A549 (cell line): ENCODE measurements at regions of chr3 and their contacts with region 1.

Region 1: GRCh38 chr3:149969940-149970715 is 567 bp downstream of the PFN2 start:
- DNase-seq: peak; percentile 29 to 88
- ATAC-seq: peak; percentile 60 to 73
- H3K4me3 ChIP-seq: peak overlapping the region; percentile 91
- H3K27ac ChIP-seq: peak overlapping the region; percentile 98 to 99
- H3K4me1 ChIP-seq: peaks cover 35% of the 10 kb centered on the region
- CTCF ChIP-seq: no peak
- EP300 ChIP-seq: no peak
- POLR2A ChIP-seq: no peak
- RAD21 ChIP-seq: no peak

Region 2: GRCh38 chr3:149949181-149949580 is 20.9 kb before region 1 on chr3:
- CTCF ChIA-PET with region 1: interaction called, 11 read pairs
- POLR2A ChIA-PET with region 1: no interaction called
- DNase-seq: no peak
- ATAC-seq: no peak
- H3K4me3 ChIP-seq: no peak overlapping the region
- H3K27ac ChIP-seq: no peak overlapping the region
- H3K4me1 ChIP-seq: no peaks in the 10 kb centered on the region
- CTCF ChIP-seq: no peak
- EP300 ChIP-seq: no peak
- POLR2A ChIP-seq: no peak
- RAD21 ChIP-seq: no peak

Region 3: DNA sequence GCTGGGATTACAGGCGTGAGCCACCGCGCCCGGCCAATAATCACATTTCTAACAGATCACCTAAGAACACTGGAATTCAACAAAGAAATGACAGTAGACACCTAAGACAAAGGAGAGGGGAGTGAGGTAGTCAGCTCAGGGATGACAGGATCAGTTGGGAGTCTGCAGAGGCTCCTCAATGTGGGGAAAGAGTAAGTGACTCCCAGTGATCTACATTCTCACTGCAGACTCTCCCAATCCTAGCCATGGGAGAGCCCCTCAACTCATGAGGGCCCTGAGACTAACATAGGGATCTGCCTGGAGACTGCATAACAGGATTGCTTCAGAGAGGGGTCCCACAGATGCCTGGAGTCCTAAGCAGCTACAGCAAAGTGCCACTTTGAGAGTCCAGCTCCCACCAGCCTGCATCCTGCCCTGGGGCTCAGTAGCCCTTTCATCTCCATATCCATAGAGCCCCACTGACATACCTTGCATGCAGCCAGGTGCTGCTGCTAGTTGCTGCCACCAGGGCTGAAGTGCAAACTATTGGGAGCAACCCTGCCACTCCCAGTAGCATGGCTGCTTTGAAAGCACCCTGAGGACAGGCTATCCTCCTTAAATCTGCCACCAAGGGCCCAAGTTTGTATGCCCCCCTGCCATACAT is 22.4 kb after region 1 on chr3:
- CTCF ChIA-PET with region 1: no interaction called
- POLR2A ChIA-PET with region 1: no interaction called
- DNase-seq: no peak
- ATAC-seq: no peak
- H3K4me3 ChIP-seq: no peak overlapping the region
- H3K27ac ChIP-seq: no peak overlapping the region
- H3K4me1 ChIP-seq: no peaks in the 10 kb centered on the region
- CTCF ChIP-seq: no peak
- EP300 ChIP-seq: no peak
- POLR2A ChIP-seq: no peak
- RAD21 ChIP-seq: no peak

Region 4: DNA sequence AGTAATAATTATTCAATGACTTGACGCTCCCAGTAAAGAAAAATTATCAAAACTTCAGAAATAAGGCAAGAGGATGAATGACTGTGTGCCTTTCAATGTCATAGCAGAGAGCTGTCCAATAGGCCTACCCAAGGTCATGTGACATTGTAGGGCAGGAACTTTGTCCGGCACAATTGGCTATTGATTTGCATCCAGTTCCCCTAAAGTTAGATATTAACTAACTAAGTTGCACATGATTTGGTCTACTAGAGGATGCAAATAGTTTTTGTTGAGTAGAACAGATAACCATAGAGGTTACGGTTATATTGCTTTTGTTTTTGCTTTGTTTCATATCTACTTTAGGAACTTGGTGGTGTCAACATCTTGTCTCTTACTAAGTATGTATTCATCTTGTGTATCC is 128.5 kb after region 1 on chr3:
- CTCF ChIA-PET with region 1: no interaction called
- POLR2A ChIA-PET with region 1: no interaction called
- DNase-seq: no peak
- ATAC-seq: no peak
- H3K4me3 ChIP-seq: no peak overlapping the region
- H3K27ac ChIP-seq: no peak overlapping the region
- H3K4me1 ChIP-seq: no peaks in the 10 kb centered on the region
- CTCF ChIP-seq: no peak
- EP300 ChIP-seq: no peak
- POLR2A ChIP-seq: no peak
- RAD21 ChIP-seq: no peak

Region 5: GRCh38 chr3:150227839-150228238 is 257.7 kb after region 1 on chr3:
- CTCF ChIA-PET with region 1: interaction called, 20 read pairs
- POLR2A ChIA-PET with region 1: no interaction called
- DNase-seq: peak; percentile 38 to 47
- ATAC-seq: peak; percentile 74 to 88; a peak in 4 of 6 replicates
- H3K4me3 ChIP-seq: no peak overlapping the region
- H3K27ac ChIP-seq: no peak overlapping the region
- H3K4me1 ChIP-seq: no peaks in the 10 kb centered on the region
- CTCF ChIP-seq: peak; percentile 53
- EP300 ChIP-seq: no peak
- POLR2A ChIP-seq: no peak
- RAD21 ChIP-seq: peak; percentile 67 to 84